Mammary epithelial cell (primary cell): ENCODE measurements at regions of chr9 and their contacts with region 1.

Region 1: DNA sequence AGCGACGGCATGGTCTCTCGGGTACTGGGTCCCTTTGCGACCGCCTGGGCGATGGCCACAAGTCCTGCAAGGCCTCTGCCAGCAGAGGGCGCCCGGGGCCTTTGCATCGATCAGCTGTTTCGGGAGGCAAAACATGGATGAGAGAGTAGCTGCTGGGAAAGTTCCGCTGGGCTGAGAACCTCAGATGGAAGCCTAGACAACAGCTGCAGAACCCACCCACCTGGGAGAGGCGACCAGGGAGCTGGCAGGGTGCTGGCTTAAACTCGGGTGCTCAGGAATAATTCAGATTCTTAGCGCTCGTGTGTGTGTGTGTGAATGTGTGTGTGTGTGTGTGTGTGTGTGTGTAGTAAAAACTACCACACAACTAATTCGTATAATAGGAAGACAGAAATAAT is 50.0 kb downstream of the TRIM32 start:
- DNase-seq: peak; percentile 62
- H3K4me3 ChIP-seq: peak overlapping the region in 1 of 3 experiments; percentile 13
- H3K27ac ChIP-seq: no peak overlapping the region
- H3K4me1 ChIP-seq: no peaks in the 10 kb centered on the region
- H3K27me3 ChIP-seq: no peaks in the 10 kb centered on the region
- CTCF ChIP-seq: peak; percentile 93 to 99

Region 2: DNA sequence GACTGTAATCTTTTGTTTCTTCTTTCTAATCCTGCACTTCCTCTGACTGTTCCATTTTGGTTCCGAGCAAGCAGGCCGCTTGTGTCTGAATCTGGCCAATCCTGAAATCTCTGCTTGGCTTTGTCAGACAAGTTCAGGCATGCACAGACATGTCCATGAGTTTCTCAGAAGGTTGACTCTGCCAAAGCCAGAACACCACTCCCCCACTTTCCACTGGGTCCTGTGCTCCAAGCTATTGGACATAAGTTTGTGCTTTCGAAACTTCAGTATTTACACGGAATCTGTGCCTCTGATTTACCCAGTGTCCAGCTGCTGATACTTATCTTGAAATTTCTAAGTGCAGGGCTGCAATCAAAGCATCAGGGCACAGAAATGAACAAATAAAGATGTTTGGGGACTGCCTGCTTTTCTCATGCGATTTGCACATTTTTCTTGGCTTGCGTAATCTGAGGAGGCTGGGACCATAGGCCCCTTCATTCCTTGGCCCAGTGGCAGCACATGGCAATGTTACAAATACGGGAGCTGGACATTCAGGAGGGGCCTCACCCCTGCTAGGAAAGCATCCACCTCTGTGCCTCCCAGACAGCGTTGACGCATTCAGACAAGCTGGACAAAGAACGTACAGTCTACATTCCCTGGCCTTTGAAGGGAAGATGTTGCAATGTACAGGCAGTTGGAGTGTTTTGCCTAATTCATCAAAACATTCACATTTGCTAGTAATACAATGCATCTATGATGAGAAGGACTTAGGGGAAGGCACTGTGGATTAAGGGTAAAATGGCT is 792.8 kb before region 1 on chr9:
- CTCF ChIA-PET with region 1: no interaction called
- dilution Hi-C with region 1: no loop called
- in situ Hi-C with region 1: no loop called
- intact Hi-C with region 1: no loop called
- DNase-seq: peak; percentile 98
- H3K4me3 ChIP-seq: peak overlapping the region in 1 of 3 experiments; percentile 6
- H3K27ac ChIP-seq: peak overlapping the region; percentile 95
- H3K4me1 ChIP-seq: peaks cover 54% of the 10 kb centered on the region
- H3K27me3 ChIP-seq: no peaks in the 10 kb centered on the region
- CTCF ChIP-seq: no peak

Region 3: GRCh38 chr9:116860509-116861120 is 123.5 kb after region 1 on chr9:
- CTCF ChIA-PET with region 1: interaction called, 12 read pairs
- dilution Hi-C with region 1: no loop called
- in situ Hi-C with region 1: loop called (anchors 5 kb)
- intact Hi-C with region 1: loop called (anchors 1 kb)
- DNase-seq: peak; percentile 66
- H3K4me3 ChIP-seq: no peak overlapping the region
- H3K27ac ChIP-seq: no peak overlapping the region
- H3K4me1 ChIP-seq: peaks cover 27% of the 10 kb centered on the region
- H3K27me3 ChIP-seq: no peaks in the 10 kb centered on the region
- CTCF ChIP-seq: peak; percentile 84 to 87

Region 4: DNA sequence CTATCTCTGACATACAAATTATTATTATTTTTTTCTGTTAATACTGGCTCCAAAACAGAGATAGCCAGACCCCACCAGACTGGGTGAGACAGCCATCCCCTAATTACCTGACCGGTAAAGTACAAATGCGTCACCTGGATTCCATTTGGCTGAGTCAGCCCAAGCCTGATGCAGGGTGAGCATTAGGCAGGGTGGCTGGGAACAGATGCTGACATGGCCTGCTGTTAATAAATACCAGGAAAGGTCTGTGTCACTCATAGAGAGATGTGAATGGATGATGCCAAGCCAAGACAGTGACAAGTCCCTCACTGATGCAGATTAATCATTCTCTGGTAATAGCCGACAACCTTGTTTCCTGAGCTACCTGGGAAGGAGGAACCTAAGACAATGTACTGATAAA is 133.4 kb after region 1 on chr9:
- CTCF ChIA-PET with region 1: no interaction called
- dilution Hi-C with region 1: no loop called
- in situ Hi-C with region 1: loop called in 1 of 2 experiments (anchors 5 kb)
- intact Hi-C with region 1: no loop called
- DNase-seq: peak; percentile 96
- H3K4me3 ChIP-seq: no peak overlapping the region
- H3K27ac ChIP-seq: peak overlapping the region; percentile 67
- H3K4me1 ChIP-seq: peaks cover 24% of the 10 kb centered on the region
- H3K27me3 ChIP-seq: no peaks in the 10 kb centered on the region
- CTCF ChIP-seq: no peak

Region 5: DNA sequence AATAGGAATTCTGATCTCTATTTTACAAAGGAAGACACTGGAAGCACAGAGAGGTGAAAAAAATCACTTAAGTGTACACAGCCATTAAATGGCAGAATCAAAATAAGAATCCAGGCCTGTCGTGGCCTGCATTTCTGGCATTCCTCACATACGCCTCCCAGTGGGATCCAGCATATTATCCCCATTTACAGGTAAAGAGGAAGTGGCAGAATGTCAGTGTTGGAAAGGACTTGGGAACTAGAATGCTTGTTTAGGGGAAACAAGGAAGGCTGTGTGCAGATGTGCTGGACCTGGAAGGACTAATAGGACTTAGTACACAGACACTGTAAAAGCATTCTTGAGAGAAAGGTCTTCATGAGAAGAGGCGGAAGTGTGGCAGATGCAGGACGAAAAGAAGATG is 191.7 kb after region 1 on chr9:
- CTCF ChIA-PET with region 1: no interaction called
- dilution Hi-C with region 1: no loop called
- in situ Hi-C with region 1: no loop called
- intact Hi-C with region 1: loop called (anchors 1 kb)
- DNase-seq: peak; percentile 25
- H3K4me3 ChIP-seq: no peak overlapping the region
- H3K27ac ChIP-seq: no peak overlapping the region
- H3K4me1 ChIP-seq: peaks cover 18% of the 10 kb centered on the region
- H3K27me3 ChIP-seq: no peaks in the 10 kb centered on the region
- CTCF ChIP-seq: peak; percentile 14 to 22

Region 6: DNA sequence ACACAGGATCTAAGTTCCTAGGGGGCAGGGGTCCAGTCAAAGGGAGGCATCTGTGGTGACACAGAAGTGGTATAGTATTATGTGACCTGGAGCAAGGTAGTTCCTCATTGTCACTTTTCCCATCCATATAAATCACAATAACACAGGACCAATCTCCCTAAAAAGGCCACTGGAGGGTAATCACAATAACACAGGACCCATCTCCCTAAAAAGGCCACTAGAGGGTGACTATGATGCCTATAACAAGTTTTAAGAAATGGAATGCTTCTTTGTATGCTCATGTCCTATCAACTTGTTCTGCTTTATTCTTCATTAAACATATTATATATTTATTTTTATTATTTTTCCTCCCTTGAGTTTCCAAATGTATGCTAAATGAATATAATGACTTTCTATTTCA is 423.1 kb after region 1 on chr9:
- CTCF ChIA-PET with region 1: interaction called, 3 read pairs
- dilution Hi-C with region 1: no loop called
- in situ Hi-C with region 1: loop called in 1 of 2 experiments (anchors 25 kb)
- intact Hi-C with region 1: loop called (anchors 5 kb)
- DNase-seq: no peak
- H3K4me3 ChIP-seq: no peak overlapping the region
- H3K27ac ChIP-seq: no peak overlapping the region
- H3K4me1 ChIP-seq: no peaks in the 10 kb centered on the region
- H3K27me3 ChIP-seq: no peaks in the 10 kb centered on the region
- CTCF ChIP-seq: peak; percentile 36 to 51

Region 7: DNA sequence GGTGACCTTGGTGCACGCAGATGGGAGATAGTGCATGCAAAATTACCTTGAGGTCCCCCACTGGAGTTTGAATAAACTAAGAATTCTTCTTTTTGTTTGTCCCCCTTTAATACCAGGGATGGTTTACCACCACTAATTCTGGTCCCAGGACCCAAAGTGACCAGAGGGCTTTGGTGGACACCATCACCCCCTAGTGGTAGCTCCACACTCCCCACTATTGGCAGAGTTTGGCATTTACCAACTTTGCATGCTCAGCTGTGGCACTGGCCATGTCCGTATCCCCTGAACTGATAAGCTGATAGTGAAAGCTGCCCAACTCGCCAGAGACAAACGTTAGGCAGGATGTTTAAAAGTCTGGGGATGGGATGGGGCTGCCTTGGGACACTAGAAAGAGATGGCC is 674.4 kb after region 1 on chr9:
- CTCF ChIA-PET with region 1: no interaction called
- dilution Hi-C with region 1: no loop called
- in situ Hi-C with region 1: loop called in 1 of 2 experiments (anchors 25 kb)
- intact Hi-C with region 1: loop called (anchors 1 kb)
- DNase-seq: peak; percentile 19
- H3K4me3 ChIP-seq: no peak overlapping the region
- H3K27ac ChIP-seq: no peak overlapping the region
- H3K4me1 ChIP-seq: peaks cover 6% of the 10 kb centered on the region
- H3K27me3 ChIP-seq: peaks cover 21% of the 10 kb centered on the region
- CTCF ChIP-seq: peak; percentile 79 to 84

Region 8: DNA sequence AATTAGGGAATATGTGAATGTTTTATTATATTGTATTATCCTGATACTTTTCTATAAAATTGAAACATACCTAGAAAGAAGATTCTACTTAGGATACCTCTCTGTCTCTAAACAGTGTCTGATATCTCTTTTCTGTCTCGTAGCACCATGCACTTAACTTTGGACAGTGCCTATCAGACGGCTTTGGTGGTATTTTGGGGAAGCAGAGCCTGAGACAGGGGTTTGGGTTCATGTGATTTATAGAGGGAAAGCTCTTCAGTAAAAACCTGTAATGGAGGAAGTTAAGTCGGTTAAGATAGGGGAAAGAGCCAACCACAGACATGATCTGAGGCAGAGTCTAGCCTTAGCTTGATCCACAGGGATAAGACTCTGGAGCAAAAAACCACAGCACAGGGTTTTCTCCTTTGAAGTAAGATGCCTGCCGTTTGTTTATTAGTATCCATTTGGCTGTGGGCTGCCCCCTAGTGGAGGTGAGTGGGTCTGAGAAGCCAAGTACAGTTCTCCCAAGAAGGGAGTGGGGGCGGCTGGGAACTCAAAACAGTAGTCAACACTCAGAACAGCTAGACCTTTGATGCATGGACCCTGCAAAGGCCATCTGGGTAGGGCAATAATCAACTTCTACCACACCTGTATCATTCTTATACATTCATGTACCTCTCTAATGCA is 818.9 kb after region 1 on chr9:
- CTCF ChIA-PET with region 1: no interaction called
- dilution Hi-C with region 1: no loop called
- in situ Hi-C with region 1: no loop called
- intact Hi-C with region 1: loop called (anchors 10 kb)
- DNase-seq: peak; percentile 40
- H3K4me3 ChIP-seq: no peak overlapping the region
- H3K27ac ChIP-seq: no peak overlapping the region
- H3K4me1 ChIP-seq: no peaks in the 10 kb centered on the region
- H3K27me3 ChIP-seq: no peaks in the 10 kb centered on the region
- CTCF ChIP-seq: peak; percentile 77 to 79